ENCODE measurements at regions of chr10 and their contacts with region 1.

Region 1: DNA sequence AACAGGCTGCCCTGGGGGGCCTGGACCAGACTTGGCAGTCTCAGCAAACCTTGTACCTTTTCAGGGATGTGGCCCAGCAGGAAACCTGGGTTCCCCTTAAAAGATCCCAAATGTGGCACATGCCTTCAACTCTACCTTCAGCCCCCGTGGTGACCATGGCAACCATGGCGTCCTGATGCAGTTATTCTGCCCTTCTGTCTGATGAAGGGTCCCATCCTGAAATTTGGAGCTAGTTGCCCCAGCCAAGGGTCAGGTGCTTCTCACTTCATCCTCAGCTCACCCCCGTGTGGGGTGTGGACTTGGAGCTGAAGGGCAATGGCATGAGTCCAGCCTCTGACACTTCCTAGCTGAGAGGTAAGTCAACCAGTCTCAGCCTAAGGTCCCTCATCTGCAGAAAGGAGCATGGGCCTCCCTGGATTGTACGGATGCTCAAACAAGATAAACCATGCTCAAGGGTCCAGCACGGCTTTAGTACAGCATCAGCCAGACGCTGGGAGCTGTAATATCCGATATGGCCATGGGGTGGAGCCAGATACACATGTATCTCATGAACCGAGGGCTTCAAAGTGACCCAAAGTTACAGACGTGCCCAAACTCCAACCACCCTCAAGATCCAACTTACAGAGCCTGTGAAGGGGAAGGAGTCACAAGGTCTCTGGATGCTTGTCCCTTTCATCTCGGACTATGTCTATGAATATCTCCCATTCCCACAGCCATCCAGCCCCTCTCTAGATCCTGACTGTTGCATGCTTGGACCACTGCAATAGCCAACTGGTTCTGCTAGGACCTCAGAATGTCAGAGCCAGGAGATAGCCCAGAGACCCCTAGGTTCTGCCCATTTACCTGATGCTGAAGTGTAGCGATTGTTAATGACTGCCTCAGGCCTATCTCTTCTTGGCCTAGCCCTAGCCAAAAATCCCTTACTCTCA is 142.5 kb downstream of the SH3PXD2A start:
- DNase-seq: peak; percentile 84
- H3K4me3 ChIP-seq: no peak overlapping the region
- H3K27ac ChIP-seq: no peak overlapping the region
- H3K4me1 ChIP-seq: peaks cover 11% of the 10 kb centered on the region
- H3K27me3 ChIP-seq: no peaks in the 10 kb centered on the region
- CTCF ChIP-seq: peak; percentile 88

Region 2: DNA sequence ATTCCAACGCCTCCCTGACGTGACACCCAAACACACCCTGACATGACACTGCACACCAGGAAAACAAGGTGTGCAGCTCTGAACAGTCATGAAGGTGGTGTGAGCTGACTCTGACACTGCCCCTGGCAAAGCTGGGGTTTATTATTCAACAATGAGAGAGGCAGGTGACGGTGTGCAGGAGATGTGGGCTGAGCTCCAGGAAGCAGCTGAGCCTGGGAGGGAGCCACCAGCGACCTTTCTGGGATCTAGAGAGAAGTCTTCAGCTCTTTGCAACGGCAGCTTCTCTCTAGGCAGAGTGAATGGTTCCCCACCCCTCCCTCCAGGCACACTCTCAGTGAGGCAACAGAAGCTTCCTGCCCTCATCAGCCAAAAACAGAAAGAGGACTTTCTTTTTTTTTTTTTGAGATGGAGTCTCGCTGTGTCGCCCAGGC is 77.0 kb after region 1 on chr10:
- CTCF ChIA-PET with region 1: no interaction called
- POLR2A ChIA-PET with region 1: no interaction called
- intact Hi-C with region 1: loop called (anchors 5 kb)
- DNase-seq: no peak
- H3K4me3 ChIP-seq: no peak overlapping the region
- H3K27ac ChIP-seq: peak overlapping the region; percentile 56
- H3K4me1 ChIP-seq: peaks cover 44% of the 10 kb centered on the region
- H3K27me3 ChIP-seq: no peaks in the 10 kb centered on the region
- CTCF ChIP-seq: no peak

Region 3: DNA sequence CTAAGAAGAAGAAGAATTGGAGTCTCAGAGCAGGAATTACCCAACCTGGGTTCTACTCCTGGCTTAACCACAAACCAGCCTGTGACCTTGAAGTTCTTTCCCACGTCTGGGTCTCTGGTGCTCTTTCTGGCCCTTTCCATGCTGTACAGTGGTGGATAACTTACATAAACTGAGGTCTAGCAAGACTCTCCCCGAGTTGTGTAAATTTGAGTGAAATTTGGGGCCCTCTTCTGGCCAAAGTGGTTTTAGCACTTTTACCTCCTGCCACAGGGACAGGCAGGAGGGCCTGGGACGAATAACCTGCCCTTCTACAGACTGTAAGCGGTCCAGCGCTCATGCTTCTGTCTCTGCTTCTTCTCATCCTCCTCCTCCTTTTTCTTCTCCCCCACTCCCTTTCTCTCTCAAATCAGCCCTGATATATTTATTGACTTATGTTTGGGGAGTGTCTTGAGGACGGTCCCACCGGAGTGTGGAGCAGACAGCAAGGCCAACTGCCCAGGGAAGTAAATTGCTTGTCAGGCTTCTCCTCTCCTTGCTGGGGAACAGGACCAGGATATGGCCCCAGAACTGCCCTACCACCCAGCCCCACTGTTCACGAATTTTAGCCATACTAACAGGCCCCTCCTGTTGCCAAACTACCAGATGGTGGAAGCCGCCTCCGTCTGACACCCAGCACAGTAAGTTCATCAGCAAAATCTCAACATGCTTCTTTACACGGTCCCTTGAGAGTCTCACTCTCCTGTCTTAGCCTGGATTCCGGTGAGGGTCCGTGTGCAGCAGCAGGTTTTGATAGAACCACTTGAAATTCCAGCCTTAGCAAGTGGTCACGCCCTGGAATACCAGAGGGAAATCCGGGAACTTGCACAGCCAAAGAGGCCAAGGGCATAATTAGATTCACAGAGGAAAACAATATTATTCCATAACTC is 146.6 kb after region 1 on chr10:
- CTCF ChIA-PET with region 1: no interaction called
- POLR2A ChIA-PET with region 1: no interaction called
- intact Hi-C with region 1: loop called (anchors 1 kb)
- DNase-seq: peak; percentile 86
- H3K4me3 ChIP-seq: no peak overlapping the region
- H3K27ac ChIP-seq: no peak overlapping the region
- H3K4me1 ChIP-seq: peaks cover 17% of the 10 kb centered on the region
- H3K27me3 ChIP-seq: no peaks in the 10 kb centered on the region
- CTCF ChIP-seq: peak; percentile 74

Region 4: DNA sequence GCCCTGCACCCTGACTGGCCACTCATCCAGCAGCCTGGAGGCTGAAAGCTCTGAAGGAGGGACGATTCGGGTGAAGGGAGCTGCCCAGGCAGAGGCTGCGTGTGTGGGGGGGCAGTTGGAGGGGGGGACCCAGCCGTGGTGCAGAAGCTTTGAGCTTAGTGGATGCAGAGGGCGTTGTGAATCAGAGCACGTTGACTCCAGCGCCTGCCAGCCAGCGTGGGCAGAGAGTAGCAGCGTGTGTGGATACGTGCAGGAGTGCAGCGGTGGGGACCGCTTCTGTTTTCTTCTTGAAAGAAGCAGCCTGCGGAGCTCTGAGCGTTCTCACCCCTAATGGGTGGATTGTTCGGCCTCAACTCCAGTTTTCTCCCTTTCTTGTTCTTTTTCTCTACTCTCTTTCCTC is 975.4 kb after region 1 on chr10:
- CTCF ChIA-PET with region 1: no interaction called
- POLR2A ChIA-PET with region 1: no interaction called
- intact Hi-C with region 1: no loop called
- DNase-seq: no peak
- H3K4me3 ChIP-seq: no peak overlapping the region
- H3K27ac ChIP-seq: no peak overlapping the region
- H3K4me1 ChIP-seq: no peaks in the 10 kb centered on the region
- H3K27me3 ChIP-seq: peaks cover 19% of the 10 kb centered on the region
- CTCF ChIP-seq: no peak